Adrenal gland (tissue), 19 donors: ENCODE measurements at regions of chr11 and their contacts with region 1.

Region 1: GRCh38 chr11:124586238-124586860 is 16.6 kb downstream of the OR8A1 start:
- DNase-seq: peak; percentile 35 to 79 (median 61)
- H3K4me3 ChIP-seq: no peak overlapping the region
- H3K27ac ChIP-seq: no peak overlapping the region
- H3K4me1 ChIP-seq: no peaks in the 10 kb centered on the region
- H3K27me3 ChIP-seq: peaks cover 3% of the 10 kb centered on the region
- CTCF ChIP-seq: peak; percentile 35 to 65 (median 51)
- POLR2A ChIP-seq: no peak

Region 2: GRCh38 chr11:124415356-124415923 is 170.9 kb before region 1 on chr11:
- intact Hi-C with region 1: loop called (anchors 5 to 10 kb)
- DNase-seq: peak in 2 of 7 donors; percentile 1 to 21
- H3K4me3 ChIP-seq: no peak overlapping the region
- H3K27ac ChIP-seq: no peak overlapping the region
- H3K4me1 ChIP-seq: no peaks in the 10 kb centered on the region
- H3K27me3 ChIP-seq: no peaks in the 10 kb centered on the region
- CTCF ChIP-seq: peak; percentile 25 to 79 (median 51)
- POLR2A ChIP-seq: no peak

Region 3: GRCh38 chr11:124421043-124421442 is 165.3 kb before region 1 on chr11:
- intact Hi-C with region 1: loop called (anchors 5 to 10 kb)
- DNase-seq: no peak
- H3K4me3 ChIP-seq: no peak overlapping the region
- H3K27ac ChIP-seq: no peak overlapping the region
- H3K4me1 ChIP-seq: no peaks in the 10 kb centered on the region
- H3K27me3 ChIP-seq: peaks cover 4% of the 10 kb centered on the region
- CTCF ChIP-seq: no peak
- POLR2A ChIP-seq: no peak

Region 4: GRCh38 chr11:124509982-124510678 is 76.2 kb before region 1 on chr11:
- intact Hi-C with region 1: no loop called
- DNase-seq: no peak
- H3K4me3 ChIP-seq: no peak overlapping the region
- H3K27ac ChIP-seq: no peak overlapping the region
- H3K4me1 ChIP-seq: no peaks in the 10 kb centered on the region
- H3K27me3 ChIP-seq: peaks cover 12% of the 10 kb centered on the region
- CTCF ChIP-seq: no peak
- POLR2A ChIP-seq: no peak

Region 5: GRCh38 chr11:124648610-124649009 is 62.3 kb after region 1 on chr11:
- intact Hi-C with region 1: no loop called
- DNase-seq: no peak
- H3K4me3 ChIP-seq: no peak overlapping the region
- H3K27ac ChIP-seq: no peak overlapping the region
- H3K4me1 ChIP-seq: no peaks in the 10 kb centered on the region
- H3K27me3 ChIP-seq: no peaks in the 10 kb centered on the region
- CTCF ChIP-seq: no peak
- POLR2A ChIP-seq: no peak

Region 6: GRCh38 chr11:124875943-124876817 is 289.8 kb after region 1 on chr11:
- intact Hi-C with region 1: no loop called
- DNase-seq: peak; percentile 82 to 92 (median 87)
- H3K4me3 ChIP-seq: peak overlapping the region; percentile 16 to 63 (median 44)
- H3K27ac ChIP-seq: peak overlapping the region; percentile 70 to 94 (median 85)
- H3K4me1 ChIP-seq: peaks cover 4 to 14% of the 10 kb centered on the region in 2 donors
- H3K27me3 ChIP-seq: peaks cover 16% of the 10 kb centered on the region
- CTCF ChIP-seq: peak; percentile 45 to 80 (median 68)
- POLR2A ChIP-seq: peak in 1 of 2 donors; percentile 49